PC-3 (cell line): ENCODE measurements at regions of chr2 and their contacts with region 1.

Region 1: GRCh38 chr2:180991820-180992219 is 11.4 kb downstream of the UBE2E3 start:
- DNase-seq: no peak
- ATAC-seq: no peak
- H3K4me3 ChIP-seq: no peak overlapping the region
- H3K27ac ChIP-seq: no peak overlapping the region
- H3K4me1 ChIP-seq: peaks cover 27% of the 10 kb centered on the region
- H3K27me3 ChIP-seq: no peaks in the 10 kb centered on the region
- CTCF ChIP-seq: no peak

Region 2: GRCh38 chr2:181036848-181037603 is 45.2 kb after region 1 on chr2:
- CTCF ChIA-PET with region 1: no interaction called
- POLR2A ChIA-PET with region 1: no interaction called
- intact Hi-C with region 1: loop called (anchors 5 kb)
- DNase-seq: peak; percentile 87
- ATAC-seq: peak; percentile 88
- H3K4me3 ChIP-seq: no peak overlapping the region
- H3K27ac ChIP-seq: peak overlapping the region; percentile 97
- H3K4me1 ChIP-seq: peaks cover 29% of the 10 kb centered on the region
- H3K27me3 ChIP-seq: no peaks in the 10 kb centered on the region
- CTCF ChIP-seq: no peak